Kidney (tissue), 22 donors: ENCODE measurements at regions of chr4 and their contacts with region 1.

Region 1: GRCh38 chr4:118772081-118772766 is 63.7 kb downstream of the SEC24D start:
- DNase-seq: peak in 2 of 5 donors; percentile 67 to 72
- H3K4me3 ChIP-seq: no peak overlapping the region
- H3K27ac ChIP-seq: no peak overlapping the region
- H3K4me1 ChIP-seq: no peaks in the 10 kb centered on the region
- H3K27me3 ChIP-seq: no peaks in the 10 kb centered on the region
- CTCF ChIP-seq: peak; percentile 70

Region 2: GRCh38 chr4:118888666-118889311 is 116.6 kb after region 1 on chr4 and contains the start of gene SYNPO2:
- intact Hi-C with region 1: loop called (anchors 10 kb)
- DNase-seq: peak; percentile 76 to 92 (median 80)
- H3K4me3 ChIP-seq: peak within 1 kb of the TSS; percentile 58 to 74 (median 72)
- H3K27ac ChIP-seq: no peak within 1 kb of the TSS
- H3K4me1 ChIP-seq: peaks cover 0 to 3% (median 0%) of the 10 kb centered on the region in 3 donors
- H3K27me3 ChIP-seq: no peaks in the 10 kb centered on the region
- CTCF ChIP-seq: no peak
- total RNA-seq, gene SYNPO2: 56.5 TPM